Posterior vena cava (tissue), 2 donors: ENCODE measurements at regions of chr19 and their contacts with region 1.

Region 1: GRCh38 chr19:31312009-31312676 is 37.1 kb downstream of the TSHZ3 start:
- DNase-seq: no peak

Region 2: GRCh38 chr19:32580901-32581703 is 1269.0 kb after region 1 on chr19 and contains the start of gene PDCD5:
- intact Hi-C with region 1: loop called in 1 of 2 experiments (anchors 10 kb)
- DNase-seq: peak; percentile 99
- total RNA-seq, gene PDCD5: 99.8 to 125 TPM